Tibial artery (tissue), 4 donors: ENCODE measurements at regions of chr5 and their contacts with region 1.

Region 1: GRCh38 chr5:147234825-147235635 is at the start of gene STK32A:
- DNase-seq: peak; percentile 43 to 87
- H3K4me3 ChIP-seq: peak within 1 kb of the TSS; percentile 65 to 87
- H3K27ac ChIP-seq: peak within 1 kb of the TSS; percentile 90 to 93
- H3K4me1 ChIP-seq: peaks cover 0 to 9% (median 4%) of the 10 kb centered on the region in 4 donors
- H3K27me3 ChIP-seq: no peaks in the 10 kb centered on the region
- CTCF ChIP-seq: no peak

Region 2: GRCh38 chr5:147245381-147246165 is 10.5 kb after region 1 on chr5:
- intact Hi-C with region 1: no loop called
- DNase-seq: no peak
- H3K4me3 ChIP-seq: no peak overlapping the region
- H3K27ac ChIP-seq: no peak overlapping the region
- H3K4me1 ChIP-seq: no peaks in the 10 kb centered on the region
- H3K27me3 ChIP-seq: no peaks in the 10 kb centered on the region
- CTCF ChIP-seq: no peak

Region 3: DNA sequence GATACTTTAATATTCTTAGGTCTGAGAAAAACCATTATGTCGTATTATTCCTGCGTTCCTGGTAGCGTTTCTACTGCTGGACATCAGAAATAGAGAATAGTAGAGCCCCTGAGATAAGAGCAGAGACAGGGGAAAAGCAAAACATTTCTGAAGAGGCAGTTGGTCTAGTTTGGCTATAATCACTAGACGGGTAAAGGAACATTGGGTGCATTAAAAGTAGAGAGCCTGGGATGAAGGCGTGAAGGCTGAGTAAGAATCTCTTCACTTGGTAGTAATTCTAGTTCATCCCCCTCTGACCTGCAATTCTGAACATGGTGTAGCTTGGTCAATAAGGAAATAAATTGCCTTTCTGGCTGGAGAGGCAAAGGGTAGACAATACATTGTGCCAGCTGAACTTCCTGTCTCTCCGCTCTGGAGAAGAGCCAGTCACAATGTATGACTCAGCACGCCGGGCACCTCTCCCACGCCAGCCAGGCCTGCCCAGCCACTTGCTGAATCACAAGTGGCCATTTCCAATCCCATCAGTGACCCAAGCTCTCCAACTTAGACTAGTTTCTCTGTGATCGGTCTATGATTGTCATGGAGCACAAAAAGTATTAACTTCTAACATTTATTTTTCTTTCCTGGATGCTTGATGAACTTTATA is 75.2 kb after region 1 on chr5:
- intact Hi-C with region 1: no loop called
- DNase-seq: peak; percentile 67 to 92
- H3K4me3 ChIP-seq: no peak overlapping the region
- H3K27ac ChIP-seq: peak overlapping the region; percentile 54 to 70
- H3K4me1 ChIP-seq: peaks cover 0 to 18% (median 3%) of the 10 kb centered on the region in 4 donors
- H3K27me3 ChIP-seq: no peaks in the 10 kb centered on the region
- CTCF ChIP-seq: no peak

Region 4: DNA sequence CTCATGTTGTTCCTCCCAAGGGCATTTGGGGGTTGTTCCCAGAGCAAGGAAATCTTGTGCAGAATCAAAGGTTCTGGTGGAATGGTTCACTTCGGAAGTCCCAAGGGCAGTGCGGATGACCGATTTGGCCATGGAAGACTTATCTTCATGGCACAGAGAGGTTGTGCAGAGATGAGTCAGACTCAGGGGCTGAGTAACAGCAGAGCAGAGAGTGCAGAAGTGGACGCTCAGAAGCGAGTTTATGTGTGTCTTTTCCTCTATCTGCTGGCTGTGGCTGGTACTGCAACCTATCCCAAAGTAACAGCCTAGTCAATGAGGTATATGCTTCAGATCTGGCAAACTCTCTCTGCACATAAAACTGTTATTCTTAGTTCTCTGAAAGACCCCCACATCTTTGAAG is 156.8 kb after region 1 on chr5:
- intact Hi-C with region 1: loop called (anchors 10 kb)
- DNase-seq: peak; percentile 77 to 79
- H3K4me3 ChIP-seq: no peak overlapping the region
- H3K27ac ChIP-seq: peak overlapping the region in 1 of 2 donors; percentile 31
- H3K4me1 ChIP-seq: no peaks in the 10 kb centered on the region
- H3K27me3 ChIP-seq: no peaks in the 10 kb centered on the region
- CTCF ChIP-seq: peak; percentile 58 to 63

Region 5: DNA sequence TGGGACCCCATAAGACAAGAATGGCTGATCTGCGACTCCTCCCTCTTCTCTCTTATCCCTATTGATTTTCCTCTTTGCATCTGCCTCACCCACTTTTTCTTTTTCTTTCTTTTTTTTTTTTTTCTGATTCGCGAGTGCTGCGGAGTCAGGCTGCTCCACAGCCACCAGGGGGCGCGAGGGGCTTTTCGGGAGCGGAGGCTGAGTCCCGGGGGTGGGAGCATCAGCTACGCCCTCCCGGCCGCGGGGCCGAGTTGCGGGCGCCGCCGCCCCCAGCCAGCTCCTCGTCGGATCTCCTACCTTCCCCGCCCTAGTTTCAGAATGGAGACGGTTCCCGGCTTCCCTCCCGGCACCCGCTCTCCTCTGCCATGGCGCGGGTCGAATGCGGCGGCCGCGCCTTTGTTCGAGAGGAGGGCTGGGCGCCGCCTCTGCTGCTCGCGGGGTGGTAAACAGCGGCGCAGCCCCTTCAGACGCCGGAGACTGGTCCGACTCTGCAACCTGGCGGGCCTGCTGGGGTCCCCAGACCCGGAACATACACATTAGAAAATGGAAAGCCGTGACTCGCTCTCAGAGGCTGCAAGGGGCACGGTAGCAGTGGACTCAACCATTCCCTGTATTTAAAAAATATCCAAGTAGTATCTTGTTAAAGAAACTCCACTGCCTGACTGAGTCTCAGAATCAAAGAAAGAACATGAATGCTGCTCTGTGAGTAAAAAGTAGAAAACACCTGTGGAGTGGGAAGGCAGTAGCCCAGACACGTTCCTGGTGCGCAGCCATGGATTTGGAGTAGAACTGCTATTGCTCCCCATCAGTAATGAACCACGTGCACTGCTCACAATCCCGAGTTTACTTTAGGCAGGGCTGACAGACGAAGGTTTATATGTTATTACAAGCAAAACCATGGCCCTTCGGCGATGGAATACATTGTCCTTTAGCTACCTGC is 219.1 kb after region 1 on chr5:
- intact Hi-C with region 1: loop called (anchors 10 kb)
- DNase-seq: peak; percentile 84 to 95
- H3K4me3 ChIP-seq: peak overlapping the region; percentile 80 to 95
- H3K27ac ChIP-seq: peak overlapping the region; percentile 93 to 99
- H3K4me1 ChIP-seq: peaks cover 0 to 49% (median 36%) of the 10 kb centered on the region in 4 donors
- H3K27me3 ChIP-seq: no peaks in the 10 kb centered on the region
- CTCF ChIP-seq: peak; percentile 85 to 90

Region 6: DNA sequence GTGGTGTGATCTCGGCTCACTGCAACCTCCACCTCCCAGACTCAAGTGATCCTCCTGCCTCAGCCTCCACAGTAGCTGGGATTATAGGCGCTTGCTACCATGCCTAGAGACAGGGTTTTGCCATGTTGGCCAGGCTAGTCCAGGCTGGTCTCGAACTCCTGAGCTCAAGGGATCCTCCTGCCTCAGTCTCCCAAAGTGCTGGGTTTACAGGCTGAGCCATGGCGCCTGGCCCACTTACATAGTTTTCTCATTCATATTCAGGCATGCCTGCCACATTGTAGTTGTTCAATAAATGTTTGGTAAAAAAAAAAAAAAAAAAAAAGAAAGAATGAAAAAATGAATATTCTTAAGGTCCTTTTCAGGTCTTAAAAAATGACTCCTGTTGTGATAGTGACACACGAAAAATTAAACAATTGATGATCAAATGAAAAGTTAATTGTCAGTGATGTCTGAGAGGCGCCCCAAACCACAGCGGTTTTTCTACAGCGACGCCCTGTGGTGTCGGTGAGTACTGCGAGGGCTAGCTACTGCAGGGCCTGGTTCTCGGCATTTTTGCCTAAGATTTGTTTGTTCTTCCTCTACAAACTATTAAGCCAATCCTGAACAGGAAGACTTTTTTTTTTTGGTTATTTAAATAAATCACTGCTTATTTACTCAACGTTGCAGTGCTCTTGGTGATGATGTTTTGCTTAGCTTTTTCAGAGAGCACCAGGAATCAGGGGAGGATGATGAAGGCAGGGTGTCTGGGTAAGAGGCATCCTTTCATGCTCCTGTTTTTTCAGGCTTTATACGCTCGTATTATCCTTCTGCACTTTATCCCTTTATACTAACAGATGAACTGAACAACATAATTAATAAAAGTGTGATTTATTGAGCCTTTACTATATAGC is 341.9 kb after region 1 on chr5:
- intact Hi-C with region 1: loop called (anchors 5 kb)
- DNase-seq: peak; percentile 54 to 75
- H3K4me3 ChIP-seq: no peak overlapping the region
- H3K27ac ChIP-seq: no peak overlapping the region
- H3K4me1 ChIP-seq: no peaks in the 10 kb centered on the region
- H3K27me3 ChIP-seq: no peaks in the 10 kb centered on the region
- CTCF ChIP-seq: peak; percentile 77 to 85